Calu3 (cell line): ENCODE measurements at regions of chr7 and their contacts with region 1.

Region 1: GRCh38 chr7:34069630-34070270 is 164.4 kb downstream of the BMPER start:
- DNase-seq: peak; percentile 43
- H3K4me3 Mint-ChIP-seq: peak overlapping the region; percentile 6
- H3K27ac Mint-ChIP-seq: peak overlapping the region; percentile 43
- H3K4me1 Mint-ChIP-seq: peaks cover 53% of the 10 kb centered on the region
- H3K27me3 Mint-ChIP-seq: no peaks in the 10 kb centered on the region
- CTCF ChIP-seq: no peak

Region 2: GRCh38 chr7:33764752-33765451 is 304.8 kb before region 1 on chr7:
- CTCF ChIA-PET with region 1: no interaction called
- intact Hi-C with region 1: no loop called
- DNase-seq: no peak
- H3K4me3 Mint-ChIP-seq: no peak overlapping the region
- H3K27ac Mint-ChIP-seq: no peak overlapping the region
- H3K4me1 Mint-ChIP-seq: peaks cover 9% of the 10 kb centered on the region
- H3K27me3 Mint-ChIP-seq: peaks cover 41% of the 10 kb centered on the region
- CTCF ChIP-seq: no peak

Region 3: DNA sequence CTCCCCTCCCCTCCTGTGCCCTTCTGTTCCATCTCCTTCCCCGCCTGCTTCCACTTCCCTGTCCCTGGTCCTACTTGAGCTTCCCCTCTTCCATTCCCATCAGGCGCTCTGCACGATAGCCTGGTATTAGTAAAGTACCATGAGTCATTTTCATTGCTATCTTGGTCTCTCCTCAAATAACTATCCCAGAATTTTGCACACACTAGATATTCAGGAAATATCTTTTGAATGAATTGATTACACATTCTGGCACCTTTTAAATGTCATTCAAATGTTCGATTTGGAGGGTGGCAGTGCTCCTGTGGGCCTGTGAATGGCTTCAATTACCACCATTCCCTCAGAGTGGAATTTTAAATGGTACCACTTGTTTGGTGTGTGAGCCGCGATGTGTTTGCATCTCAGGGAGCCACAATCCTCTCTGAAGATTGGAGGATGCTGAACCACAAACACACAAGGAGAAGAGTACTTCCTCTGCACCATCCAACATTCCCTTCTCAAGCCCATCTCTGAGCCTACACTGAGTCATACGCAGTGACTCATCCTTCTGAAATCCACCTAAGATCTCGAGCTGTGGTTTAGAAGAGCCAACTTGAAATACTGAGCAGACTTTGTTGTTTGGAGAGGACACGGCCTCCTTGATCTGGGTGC is 82.7 kb before region 1 on chr7:
- CTCF ChIA-PET with region 1: interaction called, 9 read pairs
- intact Hi-C with region 1: loop called (anchors 5 kb)
- DNase-seq: peak; percentile 75
- H3K4me3 Mint-ChIP-seq: no peak overlapping the region
- H3K27ac Mint-ChIP-seq: peak overlapping the region; percentile 32
- H3K4me1 Mint-ChIP-seq: peaks cover 23% of the 10 kb centered on the region
- H3K27me3 Mint-ChIP-seq: peaks cover under 1% of the 10 kb centered on the region
- CTCF ChIP-seq: no peak

Region 4: GRCh38 chr7:34058801-34059489 is 10.8 kb before region 1 on chr7:
- CTCF ChIA-PET with region 1: interaction called, 11 read pairs
- intact Hi-C with region 1: no loop called
- DNase-seq: no peak
- H3K4me3 Mint-ChIP-seq: no peak overlapping the region
- H3K27ac Mint-ChIP-seq: no peak overlapping the region
- H3K4me1 Mint-ChIP-seq: peaks cover 40% of the 10 kb centered on the region
- H3K27me3 Mint-ChIP-seq: no peaks in the 10 kb centered on the region
- CTCF ChIP-seq: no peak